ENCODE measurements at regions of chrX and their contacts with region 1.

Region 1: DNA sequence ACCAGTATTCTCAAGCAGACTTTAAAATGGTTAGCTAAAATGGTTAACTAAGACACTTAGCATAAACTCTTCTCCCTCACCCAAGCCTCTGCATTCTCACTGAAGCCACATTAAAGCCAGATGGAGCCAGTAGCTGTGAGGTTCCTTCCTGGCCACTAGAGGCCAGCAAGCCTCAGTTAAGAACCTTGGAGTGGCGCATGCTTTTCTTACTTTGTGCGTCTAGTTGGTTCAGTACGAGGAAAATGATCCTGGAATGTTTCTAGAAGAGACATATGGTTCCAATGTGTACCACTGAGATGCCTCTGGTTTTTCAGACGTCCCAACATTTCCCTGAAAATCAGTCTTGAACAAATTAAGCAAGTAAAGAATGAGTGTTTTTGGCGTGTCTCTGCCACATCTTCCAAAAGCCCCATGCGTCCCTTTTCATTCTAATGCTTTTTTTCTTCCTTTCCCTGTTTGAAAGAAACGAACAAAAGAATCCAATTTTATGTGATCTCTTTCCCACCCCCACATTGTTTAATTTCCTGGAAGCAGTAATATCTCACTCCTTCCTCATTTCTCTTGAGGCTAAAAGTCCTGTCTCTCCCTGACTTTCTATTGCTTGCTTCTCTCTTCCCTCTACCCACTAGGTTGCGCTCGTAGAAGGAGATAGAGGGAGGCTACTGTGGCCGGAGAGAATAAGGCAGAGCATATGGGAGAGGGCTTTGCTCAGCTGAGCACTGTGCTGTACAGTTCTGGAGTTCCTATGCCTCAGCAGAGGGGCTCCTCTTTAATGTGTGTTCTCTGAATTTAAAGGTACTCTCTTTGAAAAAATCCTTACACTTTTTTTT is 82.9 kb upstream of the TAB3 start:
- DNase-seq: peak; percentile 7
- H3K4me3 Mint-ChIP-seq: peak overlapping the region; percentile 79
- H3K27ac Mint-ChIP-seq: peak overlapping the region; percentile 61
- H3K4me1 Mint-ChIP-seq: peaks cover 18% of the 10 kb centered on the region
- H3K27me3 Mint-ChIP-seq: peaks cover 6% of the 10 kb centered on the region

Region 2: DNA sequence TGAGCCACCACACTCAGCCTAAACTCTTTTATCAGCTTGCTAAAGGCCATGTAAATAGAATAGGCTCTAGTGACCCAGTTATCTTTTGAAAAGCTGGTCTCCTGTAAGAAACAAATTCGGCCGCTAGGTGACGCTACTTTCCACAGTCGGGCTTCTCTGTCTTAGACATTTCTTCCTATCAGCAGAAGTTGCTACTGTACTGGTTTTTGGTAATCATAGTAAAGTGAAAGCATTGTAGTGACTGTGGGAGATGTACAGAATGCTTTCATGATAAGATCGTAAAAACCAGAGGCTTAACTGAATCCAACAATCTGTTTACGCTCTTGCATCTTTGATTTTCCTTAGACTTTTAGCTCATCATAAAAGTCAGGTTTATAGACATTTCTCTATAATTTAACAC is 236.2 kb before region 1 on chrX:
- intact Hi-C with region 1: loop called (anchors 1 kb)
- DNase-seq: peak; percentile 64
- H3K4me3 Mint-ChIP-seq: no peak overlapping the region
- H3K27ac Mint-ChIP-seq: no peak overlapping the region
- H3K4me1 Mint-ChIP-seq: peaks cover 11% of the 10 kb centered on the region
- H3K27me3 Mint-ChIP-seq: no peaks in the 10 kb centered on the region

Region 3: GRCh38 chrX:31136144-31136611 is 164.2 kb after region 1 on chrX:
- intact Hi-C with region 1: loop called (anchors 10 kb)
- DNase-seq: no peak
- H3K4me3 Mint-ChIP-seq: peak overlapping the region; percentile 48
- H3K27ac Mint-ChIP-seq: peak overlapping the region; percentile 79
- H3K4me1 Mint-ChIP-seq: peaks cover 23% of the 10 kb centered on the region
- H3K27me3 Mint-ChIP-seq: no peaks in the 10 kb centered on the region

Region 4: DNA sequence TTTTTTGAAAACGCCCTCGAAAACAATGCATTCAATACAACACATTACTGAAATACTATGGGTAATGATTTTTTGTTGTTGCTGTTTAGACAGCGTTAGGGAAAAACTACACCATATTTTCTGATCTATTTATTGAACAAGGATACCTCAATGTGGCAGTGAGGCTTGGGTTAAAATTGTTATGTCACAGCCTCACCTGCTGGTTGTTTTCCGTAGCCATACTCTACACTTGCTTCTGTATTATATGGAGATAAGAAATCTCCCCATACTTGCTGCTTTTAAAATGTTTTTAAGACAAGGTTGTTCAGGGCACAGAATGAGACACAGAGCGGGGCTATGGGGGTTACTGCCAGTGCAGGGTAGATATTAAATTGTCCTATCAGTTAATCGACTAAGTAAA is 321.4 kb after region 1 on chrX:
- intact Hi-C with region 1: loop called (anchors 1 kb)
- DNase-seq: no peak
- H3K4me3 Mint-ChIP-seq: no peak overlapping the region
- H3K27ac Mint-ChIP-seq: no peak overlapping the region
- H3K4me1 Mint-ChIP-seq: no peaks in the 10 kb centered on the region
- H3K27me3 Mint-ChIP-seq: peaks cover 2% of the 10 kb centered on the region

Region 5: GRCh38 chrX:31658360-31658759 is 686.4 kb after region 1 on chrX:
- intact Hi-C with region 1: loop called (anchors 1 kb)
- DNase-seq: no peak
- H3K4me3 Mint-ChIP-seq: no peak overlapping the region
- H3K27ac Mint-ChIP-seq: no peak overlapping the region
- H3K4me1 Mint-ChIP-seq: no peaks in the 10 kb centered on the region
- H3K27me3 Mint-ChIP-seq: no peaks in the 10 kb centered on the region

Measured in activated T-helper 1 cell treated with anti-CD3 and anti-CD28 coated beads, Interleukin-12 subunit alpha, Interleukin-12 subunit beta, Interleukin-2, Interleukin-4 antibody, amounts not matched to agents 30 ng/mL and 10 ng/mL and 1 ng/mL, durations not matched to agents 14 hours and 24 hours and 36 hours (primary cell).